Activated CD4-positive, alpha-beta T cell treated with anti-CD3 and anti-CD28 coated beads for 36 hours (primary cell): ENCODE measurements at regions of chr10 and their contacts with region 1.

Region 1: DNA sequence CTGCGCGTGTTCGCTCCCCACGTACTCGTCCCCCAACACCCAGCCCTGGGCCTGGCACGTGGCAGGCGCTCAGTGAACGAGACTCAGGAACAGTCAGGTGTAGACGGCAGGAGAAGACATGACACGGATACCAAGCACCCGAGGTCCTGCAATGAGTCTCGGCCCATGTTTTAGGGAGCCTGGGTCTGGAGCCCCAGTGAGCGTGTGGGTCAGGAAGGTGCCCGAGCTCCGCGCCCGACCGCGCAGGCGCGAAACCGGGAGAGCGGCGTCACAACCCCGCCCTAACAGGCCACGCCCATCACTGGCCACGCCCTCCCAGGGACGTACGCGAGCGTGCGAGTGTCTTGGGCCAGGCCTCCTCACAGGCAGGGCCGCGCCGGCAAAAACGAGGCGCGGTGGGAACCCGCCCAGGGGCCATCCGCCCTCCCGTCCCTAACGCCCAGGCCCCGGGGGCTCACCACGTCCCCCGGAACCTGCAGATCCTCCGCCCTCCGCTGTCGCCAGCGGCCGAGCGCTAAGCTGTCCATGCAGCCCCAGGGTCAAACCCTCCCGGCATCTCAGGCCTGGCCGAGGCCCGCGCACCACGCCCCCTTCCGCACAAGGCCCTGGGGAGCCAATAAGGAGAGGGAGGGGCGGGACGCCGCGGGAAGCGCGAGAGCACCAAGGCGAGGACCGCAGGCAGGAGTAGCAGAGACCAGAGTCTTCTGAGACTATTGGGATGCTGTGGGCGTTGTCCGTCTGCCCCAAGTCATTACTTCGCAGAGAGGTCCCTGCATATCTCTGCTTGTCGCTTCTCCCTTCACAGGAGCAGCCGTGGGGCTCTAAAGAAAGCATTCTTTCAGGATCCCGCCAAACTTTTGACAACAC is at the start of gene C10orf143:
- DNase-seq: peak; percentile 97
- ATAC-seq: peak; percentile 80
- H3K4me3 Mint-ChIP-seq: peak within 1 kb of the TSS; percentile 90
- H3K27ac Mint-ChIP-seq: peak within 1 kb of the TSS; percentile 98
- H3K4me1 Mint-ChIP-seq: peaks cover 45% of the 10 kb centered on the region
- H3K27me3 Mint-ChIP-seq: no peaks in the 10 kb centered on the region
- total RNA-seq, gene C10orf143: 4.0 to 5.4 TPM

Region 2: GRCh38 chr10:129466703-129467358 is 643.6 kb before region 1 on chr10 and contains the start of gene MGMT:
- CTCF ChIA-PET with region 1: interaction called, 3 read pairs
- POLR2A ChIA-PET with region 1: no interaction called
- intact Hi-C with region 1: loop called in 1 of 2 experiments (anchors 1 kb)
- DNase-seq: peak; percentile 99
- ATAC-seq: peak; percentile 98
- H3K4me3 Mint-ChIP-seq: peak within 1 kb of the TSS; percentile 77
- H3K27ac Mint-ChIP-seq: peak within 1 kb of the TSS; percentile 42
- H3K4me1 Mint-ChIP-seq: peaks cover 7% of the 10 kb centered on the region
- H3K27me3 Mint-ChIP-seq: no peaks in the 10 kb centered on the region
- total RNA-seq, gene MGMT: 18.0 to 22.8 TPM

Region 3: GRCh38 chr10:129971381-129972144 is 138.9 kb before region 1 on chr10:
- CTCF ChIA-PET with region 1: interaction called, 5 read pairs
- POLR2A ChIA-PET with region 1: no interaction called
- intact Hi-C with region 1: loop called in 1 of 2 experiments (anchors 2 kb)
- DNase-seq: peak; percentile 78
- ATAC-seq: peak; percentile 79
- H3K4me3 Mint-ChIP-seq: peak overlapping the region; percentile 38
- H3K27ac Mint-ChIP-seq: no peak overlapping the region
- H3K4me1 Mint-ChIP-seq: peaks cover 9% of the 10 kb centered on the region
- H3K27me3 Mint-ChIP-seq: peaks cover 62% of the 10 kb centered on the region

Region 4: DNA sequence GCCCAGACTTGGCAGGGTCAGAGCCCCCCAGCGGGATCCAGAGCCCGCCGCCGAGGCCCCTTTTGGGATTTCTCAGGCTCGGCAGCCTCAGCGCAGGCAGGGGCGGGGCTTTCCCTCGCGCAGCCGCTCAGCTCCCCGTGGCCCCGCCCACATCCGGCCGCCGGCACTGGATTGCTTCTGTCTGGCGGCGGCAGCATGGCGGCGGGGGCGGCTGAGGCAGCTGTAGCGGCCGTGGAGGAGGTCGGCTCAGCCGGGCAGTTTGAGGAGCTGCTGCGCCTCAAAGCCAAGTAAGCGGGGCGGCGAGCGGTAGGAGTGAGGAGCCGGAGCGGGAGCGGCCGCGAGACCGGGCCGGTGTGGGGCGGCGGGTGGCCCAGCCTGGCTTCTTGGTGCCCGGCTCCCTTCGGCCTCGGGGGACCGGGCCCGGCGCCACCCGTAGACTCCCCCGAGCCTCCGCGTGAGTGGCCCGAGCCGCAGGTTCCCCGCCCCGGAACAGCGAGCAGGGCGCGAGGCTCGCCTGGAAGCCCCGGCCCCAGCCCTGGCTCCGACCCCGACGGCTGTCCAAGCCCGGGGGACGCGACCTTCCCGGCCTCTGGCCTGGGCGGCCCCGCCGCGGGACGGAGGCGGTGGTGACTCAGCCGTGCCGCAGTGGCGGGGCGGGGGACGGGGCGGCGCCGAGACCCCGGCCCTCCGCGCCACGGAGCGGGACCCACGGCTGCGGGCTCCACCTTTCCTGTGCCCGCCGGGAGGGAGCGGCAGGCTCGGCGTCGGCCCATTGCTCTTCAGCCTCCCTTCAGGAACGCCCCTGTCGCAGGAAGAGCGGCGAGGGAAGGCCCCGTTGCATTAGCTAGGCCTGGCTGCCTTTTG is 26.0 kb after region 1 on chr10 and contains the start of gene GLRX3:
- CTCF ChIA-PET with region 1: interaction called, 39 read pairs
- POLR2A ChIA-PET with region 1: interaction called, 39 read pairs
- intact Hi-C with region 1: loop called (anchors 1 kb)
- DNase-seq: peak; percentile 95
- ATAC-seq: peak; percentile 82
- H3K4me3 Mint-ChIP-seq: peak within 1 kb of the TSS; percentile 84
- H3K27ac Mint-ChIP-seq: peak within 1 kb of the TSS; percentile 82
- H3K4me1 Mint-ChIP-seq: peaks cover 41% of the 10 kb centered on the region
- H3K27me3 Mint-ChIP-seq: peaks cover 2% of the 10 kb centered on the region
- total RNA-seq, gene GLRX3: 117 to 123 TPM

Region 5: GRCh38 chr10:130301021-130301892 is 190.8 kb after region 1 on chr10:
- CTCF ChIA-PET with region 1: no interaction called
- POLR2A ChIA-PET with region 1: interaction called, 8 read pairs
- intact Hi-C with region 1: loop called in 1 of 2 experiments (anchors 2 kb)
- DNase-seq: peak; percentile 89
- ATAC-seq: peak; percentile 68
- H3K4me3 Mint-ChIP-seq: peak overlapping the region; percentile 80
- H3K27ac Mint-ChIP-seq: peak overlapping the region; percentile 75
- H3K4me1 Mint-ChIP-seq: peaks cover 12% of the 10 kb centered on the region
- H3K27me3 Mint-ChIP-seq: no peaks in the 10 kb centered on the region

Region 6: DNA sequence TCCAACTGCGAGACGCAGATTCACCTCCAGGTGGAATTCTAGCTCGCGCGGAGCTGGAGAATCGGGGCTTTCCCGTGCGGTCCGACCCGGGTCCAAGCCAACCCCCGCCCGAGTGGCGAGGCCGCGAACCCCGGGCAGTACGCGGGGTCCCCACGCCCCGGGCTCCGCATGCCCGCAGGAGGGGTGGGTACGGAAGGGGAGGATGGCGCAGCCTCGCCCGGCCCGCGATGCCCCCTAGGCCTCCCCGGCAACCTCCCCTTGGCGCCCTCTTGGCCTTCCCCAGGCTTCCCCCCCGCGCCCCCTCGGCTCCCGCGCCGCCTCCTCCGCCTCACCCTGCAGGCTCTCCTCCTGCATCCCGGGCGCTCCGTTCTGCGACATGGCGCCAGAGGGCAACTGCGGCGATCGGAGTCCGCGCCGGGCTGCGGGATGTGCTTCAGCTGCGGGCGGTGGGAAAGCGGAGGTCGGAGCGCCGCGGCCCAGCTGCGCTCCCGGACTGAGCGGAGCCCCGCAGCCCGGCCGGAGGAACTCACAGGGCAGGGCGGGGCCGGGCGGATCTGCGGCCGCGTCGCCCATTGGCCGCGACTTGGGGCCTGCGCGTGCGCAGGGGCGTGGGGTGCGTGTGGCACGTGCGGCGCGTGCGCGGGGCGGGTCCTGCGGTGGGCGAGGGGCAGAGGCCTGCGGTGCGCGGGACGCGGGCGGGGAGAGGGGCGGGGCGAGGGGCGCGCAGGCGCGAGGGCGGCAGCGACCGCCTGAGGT is 1871.1 kb after region 1 on chr10 and contains the start of gene BNIP3:
- CTCF ChIA-PET with region 1: no interaction called
- POLR2A ChIA-PET with region 1: no interaction called
- intact Hi-C with region 1: loop called in 1 of 2 experiments (anchors 2 kb)
- DNase-seq: peak; percentile 97
- ATAC-seq: peak; percentile 90
- H3K4me3 Mint-ChIP-seq: peak within 1 kb of the TSS; percentile 90
- H3K27ac Mint-ChIP-seq: peak within 1 kb of the TSS; percentile 79
- H3K4me1 Mint-ChIP-seq: peaks cover 36% of the 10 kb centered on the region
- H3K27me3 Mint-ChIP-seq: no peaks in the 10 kb centered on the region
- total RNA-seq, gene BNIP3: 200 to 256 TPM